K562 (cell line): ENCODE measurements at regions of chr7 and their contacts with region 1.

Region 1: DNA sequence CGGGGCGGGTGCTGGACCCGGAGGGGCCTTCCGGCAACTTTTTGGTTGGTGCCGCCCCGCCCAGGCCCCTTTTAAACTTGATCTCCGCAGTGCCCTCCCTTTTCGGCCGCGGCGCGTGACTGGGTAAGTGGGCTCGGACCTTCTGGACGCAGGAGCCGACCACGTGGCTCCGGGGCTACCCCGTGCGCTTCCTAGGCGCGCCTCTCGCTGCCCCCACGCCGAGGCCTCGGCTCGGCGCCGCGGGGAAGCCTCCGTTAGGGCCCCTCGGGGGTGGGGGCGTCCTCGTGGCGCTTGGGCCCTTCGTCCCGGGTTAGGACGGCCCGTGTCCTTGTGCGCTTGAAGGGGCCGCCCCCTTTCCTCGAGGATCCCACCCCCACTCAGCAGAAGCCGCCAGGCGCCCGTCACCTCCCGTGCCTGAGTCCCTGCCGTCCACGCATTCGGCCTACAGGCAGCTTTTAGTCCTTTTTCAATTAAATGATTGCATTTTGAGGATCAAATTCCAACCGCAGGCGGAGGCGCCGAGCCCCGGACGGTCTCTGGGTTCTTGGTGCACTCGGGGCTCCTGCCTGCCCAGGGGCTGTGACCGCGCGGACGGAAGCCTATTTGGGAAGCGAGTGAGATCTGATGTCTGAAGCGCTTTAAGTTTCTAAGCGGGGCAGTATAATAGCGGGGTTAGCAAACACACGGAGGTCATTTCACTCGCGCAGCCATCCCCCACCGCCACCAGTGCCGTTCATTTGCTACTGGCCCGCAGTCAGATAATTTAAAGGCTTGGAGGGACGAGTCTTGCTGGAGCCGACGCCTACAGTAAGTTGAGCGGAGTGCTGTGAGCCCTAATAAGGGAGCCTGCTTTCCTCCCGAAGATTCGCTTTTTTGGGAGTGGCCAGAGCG is 31.8 kb upstream of the TOMM7 start:
- DNase-seq: peak; percentile 95 to 96 (median 96)
- ATAC-seq: peak; percentile 85
- H3K4me3 ChIP-seq: peak overlapping the region; percentile 56
- H3K27ac ChIP-seq: peak overlapping the region; percentile 90
- H3K4me1 ChIP-seq: peaks cover 17 to 31% of the 10 kb centered on the region in 2 experiments
- H3K27me3 ChIP-seq: no peaks in the 10 kb centered on the region
- CTCF ChIP-seq: peak in 1 of 3 experiments; percentile 40; a peak in 1 of 6 replicates
- EP300 ChIP-seq: no peak
- POLR2A ChIP-seq: peak; percentile 84
- RAD21 ChIP-seq: 0 out of 4 replicates have a peak, but pooled peaks of 1 of the 2 experiments have one; percentile 13

Region 2: DNA sequence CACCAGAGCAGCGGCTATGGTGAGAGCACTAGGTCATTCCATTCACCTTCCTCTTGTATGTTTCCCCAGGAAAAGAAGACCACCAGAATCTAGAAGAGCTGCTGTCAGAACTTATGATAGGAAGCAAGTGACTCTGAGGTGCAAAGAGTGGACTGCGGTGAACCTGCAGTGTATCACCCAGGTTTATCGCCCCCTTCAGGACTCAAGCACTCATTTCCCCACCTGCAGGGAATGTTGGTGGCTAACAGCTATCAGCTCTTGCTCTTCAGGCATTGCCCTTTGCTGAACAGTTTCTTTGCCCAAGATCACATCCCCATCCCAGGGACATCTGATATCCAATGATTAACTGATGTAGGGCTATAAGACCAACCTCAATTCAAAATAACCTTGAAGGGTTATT is 193.7 kb before region 1 on chr7:
- CTCF ChIA-PET with region 1: no interaction called
- POLR2A ChIA-PET with region 1: no interaction called
- in situ Hi-C with region 1: no loop called
- intact Hi-C with region 1: loop called (anchors 10 kb)
- DNase-seq: peak in 3 of 4 experiments; percentile 37 to 63 (median 54)
- ATAC-seq: peak; percentile 79
- H3K4me3 ChIP-seq: no peak overlapping the region
- H3K27ac ChIP-seq: no peak overlapping the region
- H3K4me1 ChIP-seq: peaks cover 13 to 31% of the 10 kb centered on the region in 2 experiments; a peak in 4 of 5 replicates
- H3K27me3 ChIP-seq: no peaks in the 10 kb centered on the region
- CTCF ChIP-seq: peak; percentile 60 to 71 (median 64)
- EP300 ChIP-seq: no peak
- POLR2A ChIP-seq: no peak
- RAD21 ChIP-seq: peak in 1 of 2 experiments; percentile 42; a peak in 2 of 4 replicates

Region 3: GRCh38 chr7:22822486-22823141 is 31.8 kb before region 1 on chr7 and contains the start of gene TOMM7:
- CTCF ChIA-PET with region 1: no interaction called
- POLR2A ChIA-PET with region 1: interaction called, 7 read pairs
- in situ Hi-C with region 1: no loop called
- intact Hi-C with region 1: loop called (anchors 1 kb)
- DNase-seq: peak; percentile 93 to 98 (median 94)
- ATAC-seq: peak; percentile 87
- H3K4me3 ChIP-seq: peak within 1 kb of the TSS; percentile 56
- H3K27ac ChIP-seq: peak within 1 kb of the TSS; percentile 84
- H3K4me1 ChIP-seq: peaks cover 17 to 27% of the 10 kb centered on the region in 2 experiments; a peak in 4 of 5 replicates
- H3K27me3 ChIP-seq: no peaks in the 10 kb centered on the region
- CTCF ChIP-seq: peak; percentile 21 to 32 (median 32); a peak in 3 of 6 replicates
- EP300 ChIP-seq: no peak
- POLR2A ChIP-seq: peak; percentile 89
- RAD21 ChIP-seq: no peak
- polyA plus RNA-seq, gene TOMM7: 787 to 797 TPM

Region 4: GRCh38 chr7:22867003-22867402 is 12.6 kb after region 1 on chr7:
- CTCF ChIA-PET with region 1: no interaction called
- POLR2A ChIA-PET with region 1: interaction called, 13 read pairs
- in situ Hi-C with region 1: no loop called
- intact Hi-C with region 1: no loop called
- DNase-seq: no peak
- ATAC-seq: no peak
- H3K4me3 ChIP-seq: no peak overlapping the region
- H3K27ac ChIP-seq: no peak overlapping the region
- H3K4me1 ChIP-seq: no peaks in the 10 kb centered on the region; a peak in 3 of 5 replicates
- H3K27me3 ChIP-seq: no peaks in the 10 kb centered on the region
- CTCF ChIP-seq: no peak
- EP300 ChIP-seq: no peak
- POLR2A ChIP-seq: no peak
- RAD21 ChIP-seq: no peak

Region 5: DNA sequence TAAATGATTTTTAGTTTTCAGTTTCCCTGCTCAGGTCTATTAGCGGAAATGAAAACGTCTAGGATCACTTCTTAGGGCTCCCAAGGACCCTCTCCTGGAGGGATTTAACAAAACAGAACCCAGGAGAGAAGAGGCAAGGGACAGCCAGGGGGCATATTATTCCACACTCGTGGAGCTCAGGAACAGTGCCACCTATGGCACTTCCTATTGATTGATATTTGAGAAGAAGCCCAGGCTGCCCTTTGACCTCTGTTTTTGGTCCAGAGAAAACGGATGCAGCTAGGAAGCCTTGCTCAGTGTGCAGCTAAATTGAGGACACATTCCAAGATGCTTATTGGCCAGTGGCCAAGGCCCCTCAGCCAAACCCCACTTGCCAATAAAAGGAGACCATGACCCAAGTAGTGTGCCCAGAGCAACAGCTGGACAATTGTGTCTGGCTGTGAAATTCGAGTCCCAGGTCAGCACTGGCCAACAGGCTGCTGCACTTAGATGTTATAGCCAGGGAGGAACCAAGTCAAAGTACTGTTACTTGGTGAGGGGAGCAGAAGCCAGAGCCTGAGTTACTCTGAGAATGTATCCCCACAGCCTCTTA is 368.1 kb after region 1 on chr7:
- CTCF ChIA-PET with region 1: no interaction called
- POLR2A ChIA-PET with region 1: no interaction called
- in situ Hi-C with region 1: no loop called
- intact Hi-C with region 1: no loop called
- DNase-seq: no peak
- ATAC-seq: no peak
- H3K4me3 ChIP-seq: no peak overlapping the region
- H3K27ac ChIP-seq: no peak overlapping the region
- H3K4me1 ChIP-seq: peaks cover 0 to 11% of the 10 kb centered on the region in 2 experiments; a peak in 3 of 5 replicates
- H3K27me3 ChIP-seq: no peaks in the 10 kb centered on the region
- CTCF ChIP-seq: no peak
- EP300 ChIP-seq: no peak
- POLR2A ChIP-seq: no peak
- RAD21 ChIP-seq: no peak